ENCODE measurements at regions of chr2 and their contacts with region 1.

Region 1: DNA sequence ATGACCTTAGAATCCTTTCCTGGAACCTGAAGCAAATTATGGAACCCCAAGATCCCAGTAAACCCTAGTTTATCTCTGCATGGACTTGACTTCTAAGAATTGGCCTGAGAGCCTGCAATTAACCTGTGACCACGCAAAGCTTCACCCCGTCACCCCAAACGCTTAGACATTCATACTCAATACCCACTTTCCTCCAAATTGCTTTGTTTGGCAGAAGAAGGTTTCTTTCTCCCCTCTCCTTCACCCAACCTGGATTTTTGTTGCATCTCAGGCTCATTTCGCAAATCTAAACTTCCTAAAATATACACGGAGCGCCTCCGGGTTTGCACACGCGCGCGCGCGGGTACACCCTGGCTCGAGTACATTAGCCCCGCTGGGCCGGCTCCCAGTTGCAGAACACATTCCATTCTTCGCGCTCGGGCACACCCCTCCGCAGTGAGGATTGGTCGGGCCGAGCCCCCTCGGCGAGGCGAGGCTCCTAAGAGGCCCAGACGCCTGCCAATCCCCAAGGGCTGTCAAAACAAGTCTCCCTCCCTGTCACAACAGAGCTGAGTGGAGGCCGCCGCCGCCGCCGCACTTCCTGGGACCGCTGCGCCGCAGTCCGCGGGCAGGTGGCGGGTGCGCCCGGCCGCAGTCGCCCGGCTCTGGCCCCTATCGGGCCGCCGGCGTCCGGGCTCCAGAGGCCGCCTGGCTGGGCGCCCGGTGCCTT is at the start of gene PLCL1:
- DNase-seq: peak; percentile 97 to 98
- H3K4me3 ChIP-seq: peak within 1 kb of the TSS; percentile 42 to 87 (median 83)
- H3K27ac ChIP-seq: peak within 1 kb of the TSS; percentile 23 to 82 (median 71)
- H3K4me1 ChIP-seq: peaks cover 11 to 12% of the 10 kb centered on the region in 2 donors
- H3K27me3 ChIP-seq: no peaks in the 10 kb centered on the region
- CTCF ChIP-seq: peak in 3 of 6 experiments; percentile 13 to 32 (median 29)
- POLR2A ChIP-seq: peak; percentile 16 to 95
- total RNA-seq, gene PLCL1: 9.1 to 11.8 (median 9.9) TPM

Region 2: GRCh38 chr2:197515739-197516392 is 288.3 kb before region 1 on chr2 and contains the start of gene MOB4:
- intact Hi-C with region 1: no loop called
- DNase-seq: peak; percentile 95
- H3K4me3 ChIP-seq: peak within 1 kb of the TSS; percentile 59 to 95 (median 84)
- H3K27ac ChIP-seq: peak within 1 kb of the TSS; percentile 91 to 98 (median 97)
- H3K4me1 ChIP-seq: peaks cover 0 to 7% of the 10 kb centered on the region in 2 donors
- H3K27me3 ChIP-seq: no peaks in the 10 kb centered on the region
- CTCF ChIP-seq: peak in 1 of 6 experiments; percentile 29
- POLR2A ChIP-seq: peak; percentile 33 to 99
- total RNA-seq, gene MOB4: 24.7 to 36.1 (median 28.6) TPM

Region 3: DNA sequence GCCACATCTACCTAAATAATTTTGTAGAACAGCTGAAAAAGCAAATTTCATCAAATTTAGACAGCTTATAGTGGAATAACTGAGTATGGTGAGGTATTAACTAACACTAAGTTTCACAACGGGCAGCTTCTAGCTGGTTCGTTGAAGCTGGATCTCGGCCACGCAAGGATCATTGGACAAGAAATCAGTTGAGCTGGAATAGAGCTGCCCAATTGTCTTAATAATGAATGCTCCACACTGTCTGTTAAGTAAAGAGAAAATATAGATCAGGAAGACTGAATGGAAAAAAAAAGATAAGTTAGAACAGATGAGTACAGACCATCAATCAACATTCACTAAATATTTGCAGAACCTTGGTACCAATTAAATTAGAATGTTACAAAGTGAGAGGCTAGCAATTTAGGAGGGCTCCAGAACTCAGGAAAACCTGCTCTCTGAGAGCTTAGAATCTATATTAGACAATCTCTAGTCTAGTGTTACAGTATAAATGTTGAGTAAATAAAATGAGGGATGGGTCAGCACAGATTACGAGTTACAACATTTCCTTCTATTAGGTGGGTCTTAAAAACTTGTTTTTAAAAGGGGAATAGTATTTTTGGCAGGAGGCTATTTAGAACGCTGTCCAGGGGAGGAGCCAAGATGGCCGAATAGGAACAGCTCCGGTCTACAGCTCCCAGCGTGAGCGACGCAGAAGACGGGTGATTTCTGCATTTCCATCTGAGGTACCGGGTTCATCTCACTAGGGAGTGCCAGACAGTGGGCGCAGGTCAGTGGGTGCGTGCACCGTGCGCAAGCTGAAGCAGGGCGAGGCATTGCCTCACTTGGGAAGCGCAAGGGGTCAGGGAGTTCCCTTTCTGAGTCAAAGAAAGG is 75.6 kb before region 1 on chr2:
- intact Hi-C with region 1: no loop called
- DNase-seq: no peak
- H3K4me3 ChIP-seq: no peak overlapping the region
- H3K27ac ChIP-seq: no peak overlapping the region
- H3K4me1 ChIP-seq: no peaks in the 10 kb centered on the region
- H3K27me3 ChIP-seq: no peaks in the 10 kb centered on the region
- CTCF ChIP-seq: no peak
- POLR2A ChIP-seq: no peak

Region 4: GRCh38 chr2:198127627-198128026 is 323.4 kb after region 1 on chr2:
- intact Hi-C with region 1: loop called (anchors 5 kb)
- DNase-seq: peak; percentile 12 to 38
- H3K4me3 ChIP-seq: no peak overlapping the region
- H3K27ac ChIP-seq: no peak overlapping the region
- H3K4me1 ChIP-seq: no peaks in the 10 kb centered on the region
- H3K27me3 ChIP-seq: no peaks in the 10 kb centered on the region
- CTCF ChIP-seq: peak in 5 of 6 experiments; percentile 21 to 56 (median 55)
- POLR2A ChIP-seq: no peak

Region 5: GRCh38 chr2:198296665-198297308 is 492.6 kb after region 1 on chr2:
- intact Hi-C with region 1: loop called (anchors 5 kb)
- DNase-seq: peak; percentile 42
- H3K4me3 ChIP-seq: no peak overlapping the region
- H3K27ac ChIP-seq: no peak overlapping the region
- H3K4me1 ChIP-seq: no peaks in the 10 kb centered on the region
- H3K27me3 ChIP-seq: no peaks in the 10 kb centered on the region
- CTCF ChIP-seq: peak; percentile 43 to 84 (median 74)
- POLR2A ChIP-seq: no peak

Measured in thyroid gland (tissue), 4 donors.